Mammary epithelial cell (primary cell): ENCODE measurements at regions of chr7 and their contacts with region 1.

Region 1: GRCh38 chr7:98713165-98713810 is 96.2 kb downstream of the NPTX2 start:
- DNase-seq: peak; percentile 7
- H3K4me3 ChIP-seq: no peak overlapping the region
- H3K27ac ChIP-seq: no peak overlapping the region
- H3K4me1 ChIP-seq: no peaks in the 10 kb centered on the region
- H3K27me3 ChIP-seq: no peaks in the 10 kb centered on the region
- CTCF ChIP-seq: no peak

Region 2: DNA sequence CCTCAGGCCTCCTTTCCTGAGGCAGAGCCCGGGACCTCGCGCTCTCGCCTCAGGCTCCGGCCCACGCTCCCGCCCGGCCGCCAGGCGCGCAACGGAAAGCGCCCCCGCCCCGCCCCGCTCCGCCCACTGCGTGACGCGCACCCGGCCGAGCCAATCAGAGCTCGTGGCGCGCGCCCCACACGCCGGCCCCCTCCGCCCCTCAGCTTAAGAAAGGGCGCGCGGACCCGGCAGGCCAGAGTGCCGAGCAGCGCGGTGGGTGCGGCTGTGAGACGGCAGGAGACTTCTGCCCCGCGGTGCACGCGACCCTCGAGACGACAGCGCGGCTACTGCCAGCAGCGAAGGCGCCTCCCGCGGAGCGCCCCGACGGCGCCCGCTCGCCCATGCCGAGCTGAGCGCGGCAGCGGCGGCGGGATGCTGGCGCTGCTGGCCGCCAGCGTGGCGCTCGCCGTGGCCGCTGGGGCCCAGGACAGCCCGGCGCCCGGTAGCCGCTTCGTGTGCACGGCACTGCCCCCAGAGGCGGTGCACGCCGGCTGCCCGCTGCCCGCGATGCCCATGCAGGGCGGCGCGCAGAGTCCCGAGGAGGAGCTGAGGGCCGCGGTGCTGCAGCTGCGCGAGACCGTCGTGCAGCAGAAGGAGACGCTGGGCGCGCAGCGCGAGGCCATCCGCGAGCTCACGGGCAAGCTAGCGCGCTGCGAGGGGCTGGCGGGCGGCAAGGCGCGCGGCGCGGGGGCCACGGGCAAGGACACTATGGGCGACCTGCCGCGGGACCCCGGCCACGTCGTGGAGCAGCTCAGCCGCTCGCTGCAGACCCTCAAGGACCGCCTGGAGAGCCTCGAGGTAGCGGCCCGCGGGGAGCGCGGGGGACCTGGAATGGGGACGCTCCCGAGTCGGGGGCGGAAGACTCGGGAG is 96.0 kb before region 1 on chr7 and contains the start of gene NPTX2:
- CTCF ChIA-PET with region 1: no interaction called
- dilution Hi-C with region 1: loop called (anchors 5 kb)
- in situ Hi-C with region 1: no loop called
- intact Hi-C with region 1: no loop called
- DNase-seq: peak; percentile 6
- H3K4me3 ChIP-seq: no peak within 1 kb of the TSS
- H3K27ac ChIP-seq: no peak within 1 kb of the TSS
- H3K4me1 ChIP-seq: no peaks in the 10 kb centered on the region
- H3K27me3 ChIP-seq: peaks cover 18% of the 10 kb centered on the region
- CTCF ChIP-seq: no peak
- total RNA-seq, gene NPTX2: 0.21 to 3.0 TPM

Region 3: GRCh38 chr7:98816241-98816640 is 103.0 kb after region 1 on chr7:
- CTCF ChIA-PET with region 1: no interaction called
- dilution Hi-C with region 1: no loop called
- in situ Hi-C with region 1: no loop called
- intact Hi-C with region 1: no loop called
- DNase-seq: no peak
- H3K4me3 ChIP-seq: no peak overlapping the region
- H3K27ac ChIP-seq: no peak overlapping the region
- H3K4me1 ChIP-seq: no peaks in the 10 kb centered on the region
- H3K27me3 ChIP-seq: peaks cover 2% of the 10 kb centered on the region
- CTCF ChIP-seq: no peak

Region 4: DNA sequence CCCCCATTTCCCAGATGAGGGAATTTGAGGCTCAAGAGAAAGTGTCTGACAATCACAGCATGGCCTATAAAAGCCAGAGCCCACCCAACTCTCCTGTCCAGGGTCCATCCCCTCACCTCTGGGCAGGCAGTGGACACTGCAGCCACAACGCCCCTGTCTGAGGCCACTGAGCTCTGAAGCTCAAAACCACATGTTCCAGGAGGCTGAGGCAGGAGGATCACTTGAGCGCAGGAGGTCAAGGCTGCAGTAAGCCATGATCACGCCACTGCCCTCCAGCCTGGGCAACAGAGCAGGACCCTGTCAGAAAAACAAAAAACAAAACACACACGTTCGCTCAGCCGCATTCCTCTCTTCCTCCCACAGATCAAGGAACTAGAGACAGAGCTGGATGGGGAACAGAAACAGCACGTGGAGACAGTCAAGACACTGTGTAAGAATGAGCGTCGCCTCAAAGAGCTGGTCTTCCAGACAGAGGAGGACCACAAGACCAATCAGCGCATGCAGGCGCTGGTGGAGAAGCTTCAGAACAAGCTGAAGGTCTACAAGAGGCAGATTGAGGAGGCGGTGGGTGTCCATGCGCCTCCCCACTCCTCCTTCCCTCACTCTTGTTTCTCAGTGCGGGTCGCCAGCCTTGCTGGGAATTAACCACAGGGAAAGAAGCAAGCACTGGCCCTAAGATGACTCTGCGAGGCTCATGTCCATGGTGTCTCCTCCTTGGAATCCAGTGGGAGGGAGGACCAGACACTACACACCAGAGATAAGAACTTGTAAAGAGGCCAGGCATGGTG is 592.4 kb after region 1 on chr7:
- CTCF ChIA-PET with region 1: no interaction called
- dilution Hi-C with region 1: no loop called
- in situ Hi-C with region 1: no loop called
- intact Hi-C with region 1: no loop called
- DNase-seq: no peak
- H3K4me3 ChIP-seq: no peak overlapping the region
- H3K27ac ChIP-seq: no peak overlapping the region
- H3K4me1 ChIP-seq: peaks cover 3% of the 10 kb centered on the region
- H3K27me3 ChIP-seq: no peaks in the 10 kb centered on the region
- CTCF ChIP-seq: no peak